CD4-positive, alpha-beta memory T cell (primary cell): ENCODE measurements at regions of chr7 and their contacts with region 1.

Region 1: DNA sequence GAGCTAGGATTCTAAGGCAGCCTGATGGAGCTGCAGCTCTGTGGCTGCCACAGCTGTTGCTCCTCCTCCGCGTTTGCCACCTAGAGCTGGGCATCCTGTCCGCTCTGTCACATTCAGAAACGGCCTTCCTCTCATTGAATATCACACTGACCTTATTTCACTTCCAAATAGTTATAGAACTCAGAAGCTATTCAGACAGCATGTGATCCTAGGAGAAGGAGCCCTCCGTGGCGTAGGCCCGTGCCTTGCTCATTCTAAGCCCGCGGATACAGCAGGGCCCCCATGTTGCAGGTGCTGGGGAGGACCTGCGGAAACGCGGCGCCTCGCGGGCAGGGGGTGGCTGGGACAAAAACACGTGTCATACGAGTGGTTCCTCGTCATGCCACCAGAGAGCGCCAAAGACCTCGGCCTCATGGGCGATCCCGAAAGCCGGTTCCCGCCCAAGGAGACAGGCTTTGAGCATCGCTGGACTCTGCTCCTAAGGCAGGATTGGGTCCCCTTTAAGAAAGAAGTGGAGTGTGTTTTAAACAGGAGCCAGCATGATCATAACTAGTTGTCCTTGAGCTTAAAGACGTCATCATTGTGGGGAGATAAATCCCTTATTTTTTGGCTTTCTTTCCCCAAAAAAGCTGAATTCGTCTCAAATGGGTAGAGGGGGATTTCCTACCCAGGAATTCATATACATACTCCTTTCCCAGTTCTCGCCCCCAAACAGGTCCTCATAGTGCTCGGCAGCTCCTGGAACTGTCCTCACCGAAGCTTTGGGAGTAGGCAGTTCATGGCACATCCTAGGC is 17.9 kb upstream of the FIGNL1 start:
- DNase-seq: peak; percentile 72 to 78 (median 74)
- H3K4me3 ChIP-seq: peak overlapping the region in 1 of 2 donors; percentile 6
- H3K4me3 Mint-ChIP-seq: peak overlapping the region; percentile 18 to 79 (median 64)
- H3K27ac ChIP-seq: no peak overlapping the region
- H3K27ac Mint-ChIP-seq: peak overlapping the region in 5 of 7 donors; percentile 55 to 88 (median 81)
- H3K4me1 ChIP-seq: peaks cover 10% of the 10 kb centered on the region
- H3K4me1 Mint-ChIP-seq: peaks cover 2 to 14% (median 9%) of the 10 kb centered on the region in 4 donors
- H3K27me3 ChIP-seq: no peaks in the 10 kb centered on the region
- H3K27me3 Mint-ChIP-seq: peaks cover 0 to 3% of the 10 kb centered on the region in 2 donors

Region 2: DNA sequence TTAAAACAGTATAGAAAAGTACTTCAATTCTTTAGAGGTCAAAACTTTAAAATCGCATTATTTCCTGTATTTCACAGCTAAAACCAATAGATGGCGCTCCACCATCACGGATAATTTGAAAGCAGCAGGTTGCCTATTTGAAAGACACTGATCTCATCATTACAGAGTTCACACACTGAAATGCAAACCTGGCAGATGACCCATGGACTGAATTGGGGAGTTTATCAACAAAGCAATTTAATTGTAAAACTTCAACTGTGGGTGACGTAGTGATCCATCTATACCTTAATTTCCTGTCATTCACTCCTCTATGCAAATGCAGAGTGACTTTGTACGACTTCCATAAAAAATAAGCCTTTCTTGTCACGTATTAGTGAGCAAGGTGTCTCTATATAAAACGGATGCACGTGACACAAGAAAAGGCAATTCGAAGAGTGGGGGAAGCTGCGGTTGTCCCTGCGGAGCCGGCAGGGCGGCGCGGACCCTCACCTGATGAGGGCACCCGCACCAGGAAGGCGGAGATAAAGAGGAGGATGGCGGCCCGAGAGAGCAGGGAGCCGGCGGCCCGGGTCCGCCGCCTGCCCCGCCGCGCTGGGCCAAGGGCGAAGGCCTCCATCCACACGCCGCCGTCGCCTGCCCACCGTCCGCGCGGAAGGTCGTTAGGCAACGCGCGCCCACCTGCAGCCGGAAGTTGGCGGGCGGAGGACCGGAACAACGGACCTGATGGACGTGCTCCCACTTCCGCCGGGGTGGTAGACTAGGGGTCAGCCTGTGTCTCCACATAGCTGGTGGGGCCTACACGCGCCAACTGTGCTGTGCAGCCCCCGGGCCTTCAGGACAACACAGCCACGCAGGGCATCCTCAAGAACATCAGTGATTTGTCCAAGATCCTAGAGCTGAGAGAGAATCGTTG is 375.2 kb before region 1 on chr7 and contains the start of gene ZPBP:
- CTCF ChIA-PET with region 1: interaction called, 29 read pairs
- POLR2A ChIA-PET with region 1: interaction called, 4 read pairs
- intact Hi-C with region 1: loop called (anchors 1 kb)
- DNase-seq: peak; percentile 62 to 72 (median 69)
- H3K4me3 ChIP-seq: peak within 1 kb of the TSS; percentile 44 to 66
- H3K4me3 Mint-ChIP-seq: peak within 1 kb of the TSS; percentile 88 to 95 (median 88)
- H3K27ac ChIP-seq: peak within 1 kb of the TSS; percentile 23
- H3K27ac Mint-ChIP-seq: peak within 1 kb of the TSS; percentile 45 to 88 (median 80)
- H3K4me1 ChIP-seq: peaks cover 4% of the 10 kb centered on the region
- H3K4me1 Mint-ChIP-seq: peaks cover 4 to 7% (median 7%) of the 10 kb centered on the region in 4 donors
- H3K27me3 ChIP-seq: no peaks in the 10 kb centered on the region
- H3K27me3 Mint-ChIP-seq: no peaks in the 10 kb centered on the region
- total RNA-seq, gene ZPBP: not detected

Region 3: GRCh38 chr7:50359995-50360925 is 107.8 kb before region 1 on chr7:
- CTCF ChIA-PET with region 1: no interaction called
- POLR2A ChIA-PET with region 1: no interaction called
- intact Hi-C with region 1: no loop called
- DNase-seq: peak; percentile 84 to 94 (median 88)
- H3K4me3 ChIP-seq: peak overlapping the region; percentile 1 to 25
- H3K4me3 Mint-ChIP-seq: peak overlapping the region; percentile 70 to 87 (median 78)
- H3K27ac ChIP-seq: peak overlapping the region; percentile 89
- H3K27ac Mint-ChIP-seq: peak overlapping the region in 6 of 7 donors; percentile 98 to 100 (median 99)
- H3K4me1 ChIP-seq: peaks cover 99% of the 10 kb centered on the region
- H3K4me1 Mint-ChIP-seq: peaks cover 87 to 99% (median 95%) of the 10 kb centered on the region in 4 donors
- H3K27me3 ChIP-seq: no peaks in the 10 kb centered on the region
- H3K27me3 Mint-ChIP-seq: no peaks in the 10 kb centered on the region

Region 4: GRCh38 chr7:50449881-50450589 is 18.0 kb before region 1 on chr7 and contains the start of gene FIGNL1:
- CTCF ChIA-PET with region 1: interaction called, 18 read pairs
- POLR2A ChIA-PET with region 1: interaction called, 3 read pairs
- intact Hi-C with region 1: loop called (anchors 1 kb)
- DNase-seq: peak; percentile 77 to 85 (median 83)
- H3K4me3 ChIP-seq: peak within 1 kb of the TSS; percentile 66 to 73
- H3K4me3 Mint-ChIP-seq: peak within 1 kb of the TSS; percentile 87 to 97 (median 92)
- H3K27ac ChIP-seq: peak within 1 kb of the TSS; percentile 79
- H3K27ac Mint-ChIP-seq: peak within 1 kb of the TSS; percentile 17 to 99 (median 96)
- H3K4me1 ChIP-seq: peaks cover 20% of the 10 kb centered on the region
- H3K4me1 Mint-ChIP-seq: peaks cover 17 to 28% (median 19%) of the 10 kb centered on the region in 4 donors
- H3K27me3 ChIP-seq: no peaks in the 10 kb centered on the region
- H3K27me3 Mint-ChIP-seq: no peaks in the 10 kb centered on the region
- total RNA-seq, gene FIGNL1: 16.2 to 17.1 TPM

Region 5: DNA sequence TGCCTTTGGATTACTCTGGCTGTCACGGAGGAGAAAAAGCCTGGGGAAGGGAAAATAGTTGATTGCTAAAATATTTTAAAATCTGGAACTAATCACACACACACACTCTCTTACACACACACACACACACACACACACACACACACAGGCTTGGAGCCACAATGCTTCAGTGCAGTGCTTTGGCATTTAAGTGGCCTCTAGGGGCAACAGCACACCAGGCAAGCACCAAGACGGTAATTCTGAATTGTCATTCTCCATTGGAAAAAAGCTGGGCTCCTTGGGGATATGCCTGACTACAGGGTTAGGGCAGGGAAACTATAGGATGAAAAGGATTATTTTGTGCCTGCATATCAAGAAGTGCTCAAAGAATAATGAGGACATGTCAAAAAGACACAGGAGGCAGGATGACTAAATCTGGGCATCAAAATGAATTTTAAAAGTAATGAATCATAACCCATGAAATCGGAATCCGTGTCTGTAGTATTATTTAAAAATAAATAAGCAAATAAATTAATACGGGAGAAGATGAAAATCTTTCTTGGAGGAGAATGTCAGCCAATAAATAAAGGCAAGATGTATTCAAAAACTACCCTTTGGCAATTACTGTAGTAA is 127.6 kb after region 1 on chr7:
- CTCF ChIA-PET with region 1: interaction called, 12 read pairs
- POLR2A ChIA-PET with region 1: no interaction called
- intact Hi-C with region 1: no loop called
- DNase-seq: peak in 4 of 5 donors; percentile 15 to 38 (median 28)
- H3K4me3 ChIP-seq: no peak overlapping the region
- H3K4me3 Mint-ChIP-seq: peak overlapping the region in 1 of 8 donors; percentile 32
- H3K27ac ChIP-seq: no peak overlapping the region
- H3K27ac Mint-ChIP-seq: peak overlapping the region in 4 of 7 donors; percentile 54 to 85 (median 70)
- H3K4me1 ChIP-seq: peaks cover 18% of the 10 kb centered on the region
- H3K4me1 Mint-ChIP-seq: peaks cover 13 to 18% (median 17%) of the 10 kb centered on the region in 4 donors
- H3K27me3 ChIP-seq: no peaks in the 10 kb centered on the region
- H3K27me3 Mint-ChIP-seq: peaks cover 0 to under 1% of the 10 kb centered on the region in 2 donors

Region 6: GRCh38 chr7:50664461-50664922 is 196.5 kb after region 1 on chr7:
- CTCF ChIA-PET with region 1: interaction called, 31 read pairs
- POLR2A ChIA-PET with region 1: no interaction called
- intact Hi-C with region 1: no loop called
- DNase-seq: no peak
- H3K4me3 ChIP-seq: no peak overlapping the region
- H3K4me3 Mint-ChIP-seq: peak overlapping the region in 4 of 8 donors; percentile 23 to 36 (median 25)
- H3K27ac ChIP-seq: no peak overlapping the region
- H3K27ac Mint-ChIP-seq: peak overlapping the region in 6 of 7 donors; percentile 7 to 72 (median 47)
- H3K4me1 ChIP-seq: peaks cover 60% of the 10 kb centered on the region
- H3K4me1 Mint-ChIP-seq: peaks cover 46 to 60% (median 54%) of the 10 kb centered on the region in 4 donors
- H3K27me3 ChIP-seq: no peaks in the 10 kb centered on the region
- H3K27me3 Mint-ChIP-seq: no peaks in the 10 kb centered on the region

Region 7: GRCh38 chr7:51141451-51142003 is 673.5 kb after region 1 on chr7:
- CTCF ChIA-PET with region 1: interaction called, 10 read pairs
- POLR2A ChIA-PET with region 1: no interaction called
- intact Hi-C with region 1: loop called (anchors 1 kb)
- DNase-seq: peak in 1 of 5 donors; percentile 36
- H3K4me3 ChIP-seq: no peak overlapping the region
- H3K4me3 Mint-ChIP-seq: no peak overlapping the region
- H3K27ac ChIP-seq: no peak overlapping the region
- H3K27ac Mint-ChIP-seq: peak overlapping the region in 1 of 7 donors; percentile 46
- H3K4me1 ChIP-seq: peaks cover 6% of the 10 kb centered on the region
- H3K4me1 Mint-ChIP-seq: peaks cover 6 to 15% (median 11%) of the 10 kb centered on the region in 4 donors
- H3K27me3 ChIP-seq: no peaks in the 10 kb centered on the region
- H3K27me3 Mint-ChIP-seq: peaks cover 2 to 5% of the 10 kb centered on the region in 2 donors